ENCODE measurements at regions of chr15 and their contacts with region 1.

Region 1: GRCh38 chr15:40746916-40747514 is 8.0 kb downstream of the RMDN3 start:
- DNase-seq: no peak
- ATAC-seq: no peak
- H3K4me3 ChIP-seq: no peak overlapping the region
- H3K4me3 Mint-ChIP-seq: no peak overlapping the region
- H3K27ac ChIP-seq: no peak overlapping the region
- H3K27ac Mint-ChIP-seq: no peak overlapping the region
- H3K4me1 ChIP-seq: no peaks in the 10 kb centered on the region
- H3K4me1 Mint-ChIP-seq: no peaks in the 10 kb centered on the region
- H3K27me3 ChIP-seq: no peaks in the 10 kb centered on the region
- H3K27me3 Mint-ChIP-seq: no peaks in the 10 kb centered on the region
- CTCF ChIP-seq: no peak

Region 2: GRCh38 chr15:38868326-38869114 is 1878.5 kb before region 1 on chr15:
- CTCF ChIA-PET with region 1: no interaction called
- POLR2A ChIA-PET with region 1: no interaction called
- intact Hi-C with region 1: no loop called
- DNase-seq: no peak
- ATAC-seq: no peak
- H3K4me3 ChIP-seq: no peak overlapping the region
- H3K4me3 Mint-ChIP-seq: no peak overlapping the region
- H3K27ac ChIP-seq: no peak overlapping the region
- H3K27ac Mint-ChIP-seq: no peak overlapping the region
- H3K4me1 ChIP-seq: no peaks in the 10 kb centered on the region
- H3K4me1 Mint-ChIP-seq: no peaks in the 10 kb centered on the region
- H3K27me3 ChIP-seq: no peaks in the 10 kb centered on the region
- H3K27me3 Mint-ChIP-seq: peaks cover 11% of the 10 kb centered on the region
- CTCF ChIP-seq: no peak

Region 3: GRCh38 chr15:40684381-40684780 is 62.6 kb before region 1 on chr15:
- CTCF ChIA-PET with region 1: no interaction called
- POLR2A ChIA-PET with region 1: no interaction called
- intact Hi-C with region 1: loop called (anchors 1 kb)
- DNase-seq: no peak
- ATAC-seq: no peak
- H3K4me3 ChIP-seq: no peak overlapping the region
- H3K4me3 Mint-ChIP-seq: no peak overlapping the region
- H3K27ac ChIP-seq: no peak overlapping the region
- H3K27ac Mint-ChIP-seq: peak overlapping the region; percentile 41
- H3K4me1 ChIP-seq: peaks cover 11 to 15% of the 10 kb centered on the region in 2 donors
- H3K4me1 Mint-ChIP-seq: peaks cover 12% of the 10 kb centered on the region
- H3K27me3 ChIP-seq: no peaks in the 10 kb centered on the region
- H3K27me3 Mint-ChIP-seq: no peaks in the 10 kb centered on the region
- CTCF ChIP-seq: no peak